ENCODE measurements at regions of chr10 and their contacts with region 1.

Region 1: GRCh38 chr10:33134011-33134751 is 176.2 kb upstream of the ITGB1 start:
- DNase-seq: peak in 2 of 9 donors; percentile 61 to 64
- ATAC-seq: peak; percentile 58
- H3K4me3 ChIP-seq: no peak overlapping the region
- H3K4me3 Mint-ChIP-seq: peak overlapping the region in 2 of 10 donors; percentile 27 to 50
- H3K27ac ChIP-seq: no peak overlapping the region
- H3K27ac Mint-ChIP-seq: peak overlapping the region in 8 of 9 donors; percentile 54 to 95 (median 82)
- H3K4me1 ChIP-seq: peaks cover 35 to 85% of the 10 kb centered on the region in 2 donors
- H3K4me1 Mint-ChIP-seq: peaks cover 25 to 78% (median 57%) of the 10 kb centered on the region in 7 donors
- H3K27me3 ChIP-seq: no peaks in the 10 kb centered on the region
- H3K27me3 Mint-ChIP-seq: no peaks in the 10 kb centered on the region

Region 2: DNA sequence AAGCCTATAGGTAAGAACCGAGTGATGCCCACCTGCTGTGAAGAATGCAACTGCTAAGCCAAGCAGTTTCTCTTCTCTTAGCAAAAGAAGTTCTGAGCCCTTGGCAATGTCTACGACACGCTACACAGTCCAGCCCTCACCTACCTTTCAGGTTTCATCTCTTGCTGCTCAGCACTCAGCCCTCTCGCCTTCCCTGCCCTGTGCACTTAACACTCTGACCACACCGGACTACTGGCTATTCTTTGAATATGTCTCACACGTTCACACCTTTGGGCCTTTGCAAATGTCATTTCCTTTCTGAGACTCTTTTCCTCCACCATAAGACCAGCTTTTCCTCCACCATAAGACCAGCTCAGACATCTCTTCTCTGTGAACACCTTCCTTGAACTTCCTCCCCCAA is 109.1 kb before region 1 on chr10:
- CTCF ChIA-PET with region 1: no interaction called
- POLR2A ChIA-PET with region 1: no interaction called
- intact Hi-C with region 1: loop called in 1 of 2 experiments (anchors 5 kb)
- DNase-seq: no peak
- ATAC-seq: peak; percentile 39
- H3K4me3 ChIP-seq: no peak overlapping the region
- H3K4me3 Mint-ChIP-seq: no peak overlapping the region
- H3K27ac ChIP-seq: no peak overlapping the region
- H3K27ac Mint-ChIP-seq: peak overlapping the region in 1 of 9 donors; percentile 22
- H3K4me1 ChIP-seq: peaks cover 18 to 34% of the 10 kb centered on the region in 2 donors
- H3K4me1 Mint-ChIP-seq: peaks cover 16 to 50% (median 41%) of the 10 kb centered on the region in 7 donors
- H3K27me3 ChIP-seq: no peaks in the 10 kb centered on the region
- H3K27me3 Mint-ChIP-seq: peaks cover 0 to 5% (median 0%) of the 10 kb centered on the region in 5 donors

Region 3: DNA sequence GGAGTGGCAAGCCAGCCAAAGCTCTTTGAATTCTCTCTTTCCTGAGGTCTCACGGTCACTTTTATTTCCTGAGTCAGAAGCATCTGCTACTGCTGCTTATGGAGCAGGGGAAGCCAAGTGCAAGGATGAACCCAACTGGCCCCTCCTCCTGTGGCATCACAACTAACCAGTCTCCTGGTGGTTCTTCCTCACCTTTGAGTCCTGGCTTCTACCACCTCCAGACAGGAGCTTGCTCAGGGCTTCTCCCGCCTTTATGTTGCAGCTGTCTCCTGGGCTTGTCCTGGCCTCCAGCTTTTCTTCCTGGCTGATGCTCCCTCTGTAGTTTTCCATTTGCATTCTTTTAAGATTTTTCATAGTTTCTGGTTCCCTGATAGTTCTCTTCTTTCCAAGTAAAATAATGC is 550.0 kb after region 1 on chr10:
- CTCF ChIA-PET with region 1: no interaction called
- POLR2A ChIA-PET with region 1: no interaction called
- intact Hi-C with region 1: no loop called
- DNase-seq: no peak
- ATAC-seq: no peak
- H3K4me3 ChIP-seq: no peak overlapping the region
- H3K4me3 Mint-ChIP-seq: no peak overlapping the region
- H3K27ac ChIP-seq: no peak overlapping the region
- H3K27ac Mint-ChIP-seq: no peak overlapping the region
- H3K4me1 ChIP-seq: no peaks in the 10 kb centered on the region
- H3K4me1 Mint-ChIP-seq: no peaks in the 10 kb centered on the region
- H3K27me3 ChIP-seq: no peaks in the 10 kb centered on the region
- H3K27me3 Mint-ChIP-seq: peaks cover 0 to 6% (median 0%) of the 10 kb centered on the region in 5 donors